A549 (cell line): ENCODE measurements at regions of chr7 and their contacts with region 1.

Region 1: GRCh38 chr7:1065263-1066260 is 21.2 kb downstream of the GPR146 start:
- DNase-seq: peak; percentile 72 to 95
- ATAC-seq: peak; percentile 94 to 97
- H3K4me3 ChIP-seq: no peak overlapping the region
- H3K27ac ChIP-seq: no peak overlapping the region
- H3K4me1 ChIP-seq: peaks cover 4% of the 10 kb centered on the region; the same call in 1 of the 3 replicates
- CTCF ChIP-seq: peak; percentile 82
- EP300 ChIP-seq: no peak
- POLR2A ChIP-seq: no peak
- RAD21 ChIP-seq: peak; percentile 91 to 92

Region 2: GRCh38 chr7:604001-604883 is 461.3 kb before region 1 on chr7:
- CTCF ChIA-PET with region 1: no interaction called
- POLR2A ChIA-PET with region 1: no interaction called
- DNase-seq: no peak
- ATAC-seq: peak in 1 of 2 experiments; percentile 32; a peak in 2 of 6 replicates
- H3K4me3 ChIP-seq: no peak overlapping the region
- H3K27ac ChIP-seq: peak overlapping the region in 1 of 2 experiments; percentile 24; a peak in 1 of 6 replicates
- H3K4me1 ChIP-seq: no peaks in the 10 kb centered on the region
- CTCF ChIP-seq: no peak
- EP300 ChIP-seq: no peak
- POLR2A ChIP-seq: no peak
- RAD21 ChIP-seq: no peak

Region 3: DNA sequence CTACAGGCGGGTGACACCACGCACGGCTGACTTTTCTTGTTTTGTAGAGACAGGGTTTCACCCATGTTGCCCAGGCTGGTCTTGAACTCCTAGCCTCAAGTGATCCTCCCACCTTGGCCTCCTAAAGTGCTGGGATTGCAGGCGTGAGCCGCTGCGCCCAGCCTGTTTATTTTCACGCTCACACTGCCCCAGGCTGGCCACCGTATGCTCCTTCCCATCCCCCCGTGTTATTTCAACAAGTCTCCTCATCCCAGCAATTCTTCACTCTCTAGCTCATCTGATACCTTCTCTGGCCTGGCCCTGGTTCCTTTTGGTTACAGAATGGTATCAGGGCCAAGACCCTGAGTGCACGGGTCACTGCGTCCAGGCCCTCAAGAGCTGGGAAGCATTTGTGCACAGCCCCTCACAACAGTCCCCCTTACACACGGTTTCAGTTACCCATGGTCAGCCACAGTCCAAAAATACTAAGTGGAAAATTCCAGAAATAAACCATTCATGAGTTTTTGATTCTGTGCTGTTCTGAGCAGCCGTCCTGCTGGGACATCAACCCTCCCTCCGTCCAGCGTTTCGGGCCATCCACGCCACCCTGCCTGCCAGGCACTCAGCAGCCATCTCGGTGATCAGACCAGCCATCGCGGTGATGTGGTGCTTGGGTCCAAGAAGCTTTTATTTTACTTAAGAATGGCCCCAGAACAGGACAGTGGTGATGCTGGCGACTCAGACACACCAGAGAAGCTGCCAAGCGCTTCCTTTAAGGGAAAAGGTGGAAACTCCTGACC is 99.1 kb before region 1 on chr7:
- CTCF ChIA-PET with region 1: interaction called, 14 read pairs
- POLR2A ChIA-PET with region 1: interaction called, 5 read pairs
- DNase-seq: no peak
- ATAC-seq: no peak
- H3K4me3 ChIP-seq: no peak overlapping the region
- H3K27ac ChIP-seq: no peak overlapping the region
- H3K4me1 ChIP-seq: no peaks in the 10 kb centered on the region
- CTCF ChIP-seq: no peak
- EP300 ChIP-seq: no peak
- POLR2A ChIP-seq: no peak
- RAD21 ChIP-seq: no peak

Region 4: GRCh38 chr7:985915-986741 is 79.4 kb before region 1 on chr7:
- CTCF ChIA-PET with region 1: interaction called, 487 read pairs
- POLR2A ChIA-PET with region 1: no interaction called
- DNase-seq: peak in 1 of 2 experiments; percentile 38
- ATAC-seq: peak; percentile 57 to 58
- H3K4me3 ChIP-seq: no peak overlapping the region
- H3K27ac ChIP-seq: peak overlapping the region in 1 of 2 experiments; percentile 41; a peak in 1 of 6 replicates
- H3K4me1 ChIP-seq: peaks cover 16% of the 10 kb centered on the region; the same call in 1 of the 3 replicates
- CTCF ChIP-seq: no peak
- EP300 ChIP-seq: no peak
- POLR2A ChIP-seq: no peak
- RAD21 ChIP-seq: no peak

Region 5: DNA sequence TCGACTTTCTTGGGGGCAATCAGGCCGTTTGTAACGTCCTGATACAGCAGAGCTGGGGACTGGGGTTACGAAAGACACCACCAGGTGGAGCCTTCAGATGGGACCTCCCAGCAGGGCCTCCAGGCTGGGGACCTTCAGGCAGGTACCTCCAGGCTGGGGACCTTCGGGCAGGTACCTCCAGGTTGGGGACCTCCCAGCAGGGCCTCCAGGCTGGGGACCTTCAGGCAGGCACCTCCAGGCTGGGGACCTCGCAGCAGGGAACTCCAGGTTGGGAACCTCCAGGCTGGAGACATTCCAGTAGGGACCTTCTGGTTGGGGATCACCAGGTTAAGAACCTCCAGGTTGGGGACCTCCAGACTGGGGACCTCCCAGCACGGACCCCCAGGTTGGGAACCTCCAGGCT is 44.7 kb before region 1 on chr7:
- CTCF ChIA-PET with region 1: interaction called, 47 read pairs
- POLR2A ChIA-PET with region 1: no interaction called
- DNase-seq: no peak
- ATAC-seq: peak in 1 of 2 experiments; percentile 54; a peak in 3 of 6 replicates
- H3K4me3 ChIP-seq: no peak overlapping the region
- H3K27ac ChIP-seq: no peak overlapping the region
- H3K4me1 ChIP-seq: no peaks in the 10 kb centered on the region
- CTCF ChIP-seq: peak; percentile 15; the same call in 1 of the 3 replicates
- EP300 ChIP-seq: no peak
- POLR2A ChIP-seq: no peak
- RAD21 ChIP-seq: no peak

Region 6: DNA sequence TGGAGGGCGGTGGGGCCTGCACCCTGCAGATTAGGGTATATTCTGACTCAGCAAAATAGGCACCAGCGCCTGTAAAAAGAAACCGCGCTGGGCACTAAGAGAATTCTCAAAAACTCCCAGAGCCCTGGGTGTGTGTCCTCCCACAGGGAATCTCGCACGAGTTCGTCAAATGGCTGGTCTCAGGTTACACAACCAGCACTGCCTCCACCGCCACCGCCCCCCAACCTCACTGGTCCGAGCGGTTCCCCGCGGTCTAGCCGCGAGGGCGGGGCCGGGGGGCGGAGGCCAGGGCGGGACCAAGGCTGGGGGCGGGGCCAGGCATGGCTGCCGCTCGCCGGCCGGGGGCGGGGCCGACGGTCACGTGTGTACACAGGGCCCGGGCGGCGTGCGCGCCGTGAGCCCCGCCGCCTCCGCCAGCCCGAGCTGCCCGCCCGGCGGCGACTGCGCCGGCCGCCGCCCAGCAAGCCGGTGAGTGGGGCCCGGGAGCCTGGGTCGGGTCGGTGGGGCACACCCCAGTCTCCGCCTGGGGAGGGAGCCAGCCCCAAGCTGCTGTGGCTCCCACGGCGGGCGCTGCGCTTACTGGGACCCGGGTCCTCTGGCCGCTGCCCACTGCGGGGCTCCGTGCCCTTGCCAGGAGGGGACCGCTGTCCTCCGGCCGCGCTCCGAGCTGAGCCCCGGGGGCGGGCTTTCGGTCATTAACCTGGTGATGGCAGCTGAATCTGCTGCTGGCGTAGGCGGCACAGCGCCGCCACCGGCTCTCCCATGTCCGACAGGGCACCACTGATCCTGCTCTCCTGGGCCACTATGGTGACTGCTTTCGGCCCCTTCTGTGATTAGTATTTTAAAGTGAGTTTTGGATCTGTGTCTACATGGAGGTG is 21.1 kb before region 1 on chr7 and contains the start of gene GPR146:
- CTCF ChIA-PET with region 1: interaction called, 36 read pairs
- POLR2A ChIA-PET with region 1: interaction called, 3 read pairs
- DNase-seq: peak; percentile 91 to 99
- ATAC-seq: peak; percentile 89 to 92
- H3K4me3 ChIP-seq: peak within 1 kb of the TSS; percentile 60
- H3K27ac ChIP-seq: peak within 1 kb of the TSS; percentile 75 to 85
- H3K4me1 ChIP-seq: peaks cover 18% of the 10 kb centered on the region
- CTCF ChIP-seq: peak; percentile 65
- EP300 ChIP-seq: no peak
- POLR2A ChIP-seq: no peak
- RAD21 ChIP-seq: 0 out of 5 replicates have a peak, but pooled peaks of 1 of the 2 experiments have one; percentile 19
- polyA plus RNA-seq, gene GPR146: 0.50 and 0.87 TPM in 2 replicates

Region 7: DNA sequence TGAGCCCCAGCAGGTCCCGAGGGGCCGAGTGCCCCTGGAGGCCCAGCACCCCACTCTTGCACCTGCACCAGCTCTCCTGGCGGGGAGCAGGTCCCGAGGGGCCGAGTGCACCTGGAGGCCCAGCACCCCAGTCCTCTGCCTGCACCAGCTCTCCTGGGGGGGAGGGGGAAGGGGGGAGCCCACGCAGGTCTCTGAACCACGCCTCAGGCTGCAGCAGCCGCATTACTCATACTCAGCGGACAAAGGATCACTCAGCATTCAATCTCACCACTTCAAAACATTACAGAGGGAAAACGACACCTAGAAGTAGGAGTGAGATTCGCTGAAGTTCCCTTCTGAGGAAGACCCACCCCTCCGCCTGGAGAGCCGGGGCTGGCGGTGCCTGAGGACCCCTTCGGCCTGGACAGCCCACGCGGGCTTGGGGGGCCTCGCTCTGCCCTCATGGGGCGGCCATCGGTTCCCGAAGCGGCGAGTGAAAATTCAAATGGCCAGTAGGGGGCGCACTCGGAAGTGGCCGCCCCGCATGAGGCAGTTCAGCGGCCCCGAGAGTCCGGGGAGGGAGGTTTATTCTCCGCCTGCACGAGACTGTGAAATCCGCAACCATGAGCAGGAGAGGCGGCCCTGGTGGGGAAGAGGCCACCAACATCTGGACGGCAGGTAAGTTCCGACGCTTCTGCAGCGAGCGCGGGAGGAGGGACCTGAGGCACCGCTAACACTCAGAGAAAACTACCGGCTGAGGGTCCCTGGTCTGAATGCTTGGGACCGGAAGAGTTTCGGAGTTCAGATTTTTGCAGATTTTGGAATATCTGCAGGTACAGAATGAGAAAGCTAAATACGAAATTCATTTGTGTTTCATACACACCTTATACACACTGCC is 21.3 kb after region 1 on chr7:
- CTCF ChIA-PET with region 1: interaction called, 74 read pairs
- POLR2A ChIA-PET with region 1: no interaction called
- DNase-seq: peak; percentile 53 to 92
- ATAC-seq: peak; percentile 87 to 91
- H3K4me3 ChIP-seq: peak overlapping the region; percentile 18; the same call in 1 of the 3 replicates
- H3K27ac ChIP-seq: peak overlapping the region; percentile 60 to 85
- H3K4me1 ChIP-seq: peaks cover 21% of the 10 kb centered on the region
- CTCF ChIP-seq: peak; percentile 94
- EP300 ChIP-seq: no peak
- POLR2A ChIP-seq: no peak
- RAD21 ChIP-seq: peak; percentile 53 to 61